ENCODE measurements at regions of chr18 and their contacts with region 1.

Region 1: DNA sequence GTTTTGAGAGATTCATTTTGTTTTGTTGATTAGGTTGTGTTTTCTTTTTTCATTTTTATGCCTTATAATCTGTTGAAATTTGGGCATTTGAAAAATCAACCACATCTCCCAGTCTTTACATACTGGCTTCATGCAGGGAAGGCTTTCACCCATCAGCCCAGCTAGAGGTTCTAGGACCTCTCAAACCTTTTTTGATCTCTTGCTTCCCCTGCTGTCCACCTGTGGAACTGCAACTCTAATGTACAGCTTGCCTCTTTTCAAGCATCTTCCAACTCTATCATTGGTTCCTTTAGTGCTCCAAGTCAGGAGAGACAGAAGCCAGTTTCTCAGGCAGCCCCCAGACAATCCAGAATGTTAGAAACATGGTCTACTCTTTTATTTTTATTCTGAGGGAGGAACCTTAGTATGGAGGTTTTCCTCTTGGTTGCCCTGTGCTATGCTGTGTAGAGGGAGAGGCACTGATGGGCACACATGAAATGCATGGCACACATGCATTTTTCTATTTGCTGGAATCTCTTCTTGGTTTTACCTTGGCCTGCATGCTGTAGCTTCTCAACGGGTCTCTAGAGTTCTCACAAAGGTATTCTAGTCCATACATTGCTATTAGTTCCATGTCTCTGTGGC is 107.2 kb upstream of the L3MBTL4 start:
- DNase-seq: no peak
- H3K4me3 ChIP-seq: no peak overlapping the region
- H3K27me3 ChIP-seq: no peaks in the 10 kb centered on the region
- CTCF ChIP-seq: peak; percentile 90

Region 2: DNA sequence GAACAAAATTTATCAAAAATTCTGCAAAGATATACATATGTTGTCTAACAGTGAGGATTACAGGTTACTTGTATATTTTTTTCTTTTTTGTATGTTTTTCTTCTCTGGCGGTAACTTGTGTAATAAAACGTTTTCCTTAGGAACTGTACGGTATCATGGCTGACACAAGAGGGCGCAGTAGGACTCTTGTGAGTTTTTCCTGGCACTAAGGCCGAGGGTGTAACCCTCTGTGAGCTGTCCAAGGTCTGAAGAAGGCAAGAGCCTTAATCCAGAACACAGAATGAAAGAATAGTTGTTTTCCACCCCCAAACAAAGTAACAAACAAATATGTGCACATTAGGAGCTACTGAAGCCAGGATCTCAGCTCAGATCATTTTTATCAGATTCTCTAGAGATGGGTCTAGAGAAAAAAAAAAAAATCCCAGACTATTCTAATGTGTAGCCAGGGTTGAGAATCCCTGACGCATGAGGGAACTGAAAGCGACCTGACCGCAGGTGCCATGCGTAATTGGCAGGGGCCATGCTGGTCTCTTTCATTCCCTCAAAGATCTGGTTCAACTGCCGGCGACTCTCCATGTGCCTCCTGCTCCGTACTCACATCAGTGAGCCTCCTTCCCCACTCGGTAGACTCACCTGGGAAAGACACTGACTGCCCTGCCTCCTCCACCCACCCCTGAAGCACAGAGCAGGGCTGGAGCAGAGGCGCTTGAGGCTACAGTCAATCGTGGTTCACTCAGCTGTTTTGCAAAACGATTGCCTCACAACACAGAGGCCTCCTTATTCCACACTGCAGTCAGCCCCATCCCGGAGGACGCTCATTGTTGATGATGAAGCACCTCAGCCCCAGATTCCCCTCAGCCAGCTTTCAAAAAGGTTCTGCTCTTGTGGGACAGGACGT is 653.4 kb before region 1 on chr18:
- CTCF ChIA-PET with region 1: interaction called, 14 read pairs
- POLR2A ChIA-PET with region 1: no interaction called
- DNase-seq: peak; percentile 19
- H3K4me3 ChIP-seq: no peak overlapping the region
- H3K27me3 ChIP-seq: no peaks in the 10 kb centered on the region
- CTCF ChIP-seq: peak; percentile 81

Region 3: DNA sequence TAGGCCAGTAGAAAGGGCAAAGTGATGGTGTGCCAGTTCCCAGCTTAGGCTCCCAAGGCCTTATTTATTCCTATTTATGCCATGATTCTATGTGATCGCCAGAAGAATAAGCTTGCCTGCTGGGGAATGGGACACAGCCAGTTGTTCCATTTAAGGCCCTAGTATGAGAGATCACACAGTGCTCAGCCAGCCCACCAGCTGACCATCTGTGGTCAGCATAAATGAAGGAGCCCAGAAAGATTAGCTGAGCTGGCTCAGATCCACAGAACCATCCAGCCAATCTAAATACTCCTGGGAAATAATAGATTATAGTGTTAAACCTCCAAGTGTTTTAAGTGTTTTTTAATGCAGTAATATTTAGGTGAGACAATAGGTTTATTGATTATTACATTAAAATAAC is 94.6 kb before region 1 on chr18:
- CTCF ChIA-PET with region 1: no interaction called
- POLR2A ChIA-PET with region 1: no interaction called
- DNase-seq: no peak
- H3K4me3 ChIP-seq: no peak overlapping the region
- H3K27me3 ChIP-seq: no peaks in the 10 kb centered on the region
- CTCF ChIP-seq: no peak

Region 4: GRCh38 chr18:6498289-6498856 is 23.5 kb before region 1 on chr18:
- CTCF ChIA-PET with region 1: no interaction called
- POLR2A ChIA-PET with region 1: no interaction called
- DNase-seq: no peak
- H3K4me3 ChIP-seq: no peak overlapping the region
- H3K27me3 ChIP-seq: no peaks in the 10 kb centered on the region
- CTCF ChIP-seq: no peak

Region 5: DNA sequence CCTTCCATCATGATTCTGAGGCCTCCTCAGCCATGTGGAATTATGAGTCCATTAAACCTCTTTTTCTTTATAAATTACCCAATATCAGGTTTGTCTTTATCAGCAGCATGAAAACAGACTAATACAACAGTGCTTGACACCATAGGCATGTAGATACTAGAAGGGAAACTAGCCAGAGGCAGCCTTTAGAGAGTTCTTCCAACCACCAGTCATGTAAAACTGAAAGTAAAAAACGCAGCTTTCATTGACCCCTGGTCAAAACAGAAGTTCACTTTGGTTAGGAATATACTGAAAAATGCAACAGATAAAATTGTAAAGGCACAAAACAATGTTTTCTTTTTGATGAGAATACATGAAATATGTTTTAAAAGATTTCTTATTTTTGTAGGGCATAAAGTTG is 15.6 kb after region 1 on chr18:
- CTCF ChIA-PET with region 1: interaction called, 16 read pairs
- POLR2A ChIA-PET with region 1: no interaction called
- DNase-seq: no peak
- H3K4me3 ChIP-seq: no peak overlapping the region
- H3K27me3 ChIP-seq: no peaks in the 10 kb centered on the region
- CTCF ChIP-seq: no peak

Region 6: GRCh38 chr18:6576718-6577375 is 54.9 kb after region 1 on chr18:
- CTCF ChIA-PET with region 1: no interaction called
- POLR2A ChIA-PET with region 1: no interaction called
- DNase-seq: no peak
- H3K4me3 ChIP-seq: no peak overlapping the region
- H3K27me3 ChIP-seq: no peaks in the 10 kb centered on the region; the same call in none of the 2 replicates
- CTCF ChIP-seq: no peak